PC-3 (cell line): ENCODE measurements at regions of chr6 and their contacts with region 1.

Region 1: DNA sequence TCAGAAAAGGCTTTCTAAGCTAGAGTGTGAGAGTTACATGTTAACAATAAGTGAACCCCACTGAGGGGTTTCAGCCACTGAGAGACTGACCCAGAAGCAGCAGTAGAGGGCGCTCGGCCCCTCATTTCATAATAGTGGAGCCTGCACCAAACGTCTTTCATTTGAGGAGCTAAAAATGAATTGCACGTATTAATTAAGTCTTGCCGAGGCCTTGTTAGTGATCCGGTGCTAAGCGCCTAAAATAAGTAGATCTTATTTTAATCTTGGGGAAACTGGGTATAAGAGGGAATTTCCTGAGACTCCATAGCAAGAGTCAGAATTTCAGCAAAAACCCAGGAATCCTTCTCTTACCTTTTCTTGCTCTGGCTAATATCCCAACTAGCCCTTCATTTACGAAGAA is 209.7 kb downstream of the FARS2 start:
- DNase-seq: peak; percentile 74
- ATAC-seq: peak; percentile 72
- H3K4me3 ChIP-seq: no peak overlapping the region
- H3K27ac ChIP-seq: peak overlapping the region; percentile 78
- H3K4me1 ChIP-seq: peaks cover 30% of the 10 kb centered on the region
- H3K27me3 ChIP-seq: no peaks in the 10 kb centered on the region
- CTCF ChIP-seq: peak; percentile 97

Region 2: DNA sequence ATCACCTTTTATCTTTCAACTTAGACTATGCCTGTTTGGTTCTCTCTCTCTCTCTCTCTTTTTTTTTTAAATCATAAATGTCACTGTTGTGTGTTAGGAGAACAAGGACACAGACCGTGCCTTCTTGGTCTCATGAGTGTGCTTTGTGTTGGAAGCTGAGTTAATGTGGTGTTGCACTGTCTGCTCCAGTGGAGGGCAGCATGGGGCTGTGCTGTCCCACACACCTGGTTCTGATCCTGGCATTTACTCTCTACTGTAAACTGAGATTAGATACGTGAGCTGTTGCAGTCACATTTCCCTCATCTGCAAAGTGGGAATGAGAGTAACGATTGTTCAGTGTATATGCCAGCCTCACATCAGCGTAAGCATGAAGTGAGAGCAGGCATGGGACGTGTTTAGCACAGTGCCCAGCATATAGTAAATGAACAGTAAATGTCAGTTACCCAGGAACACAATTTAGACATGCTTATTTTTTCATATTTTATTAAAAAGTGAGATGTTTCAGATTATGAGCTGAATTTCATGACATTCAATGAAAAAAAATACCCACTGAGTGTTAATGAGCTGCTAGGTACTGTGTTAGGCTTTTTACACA is 48.6 kb before region 1 on chr6:
- CTCF ChIA-PET with region 1: interaction called, 4 read pairs
- POLR2A ChIA-PET with region 1: no interaction called
- intact Hi-C with region 1: loop called (anchors 1 kb)
- DNase-seq: peak; percentile 72
- ATAC-seq: peak; percentile 100
- H3K4me3 ChIP-seq: no peak overlapping the region
- H3K27ac ChIP-seq: no peak overlapping the region
- H3K4me1 ChIP-seq: no peaks in the 10 kb centered on the region
- H3K27me3 ChIP-seq: no peaks in the 10 kb centered on the region
- CTCF ChIP-seq: peak; percentile 90

Region 3: GRCh38 chr6:5497896-5498578 is 27.0 kb after region 1 on chr6:
- CTCF ChIA-PET with region 1: interaction called, 7 read pairs
- POLR2A ChIA-PET with region 1: no interaction called
- intact Hi-C with region 1: loop called (anchors 1 kb)
- DNase-seq: peak; percentile 80
- ATAC-seq: peak; percentile 67
- H3K4me3 ChIP-seq: peak overlapping the region; percentile 64
- H3K27ac ChIP-seq: peak overlapping the region; percentile 83
- H3K4me1 ChIP-seq: peaks cover 26% of the 10 kb centered on the region
- H3K27me3 ChIP-seq: no peaks in the 10 kb centered on the region
- CTCF ChIP-seq: no peak

Region 4: GRCh38 chr6:5511954-5512353 is 40.9 kb after region 1 on chr6:
- CTCF ChIA-PET with region 1: no interaction called
- POLR2A ChIA-PET with region 1: no interaction called
- intact Hi-C with region 1: no loop called
- DNase-seq: peak; percentile 76
- ATAC-seq: peak; percentile 86
- H3K4me3 ChIP-seq: no peak overlapping the region
- H3K27ac ChIP-seq: 0 out of 2 replicates have a peak overlapping the region, but pooled peaks have one; percentile 35
- H3K4me1 ChIP-seq: peaks cover 17% of the 10 kb centered on the region
- H3K27me3 ChIP-seq: no peaks in the 10 kb centered on the region
- CTCF ChIP-seq: no peak

Region 5: DNA sequence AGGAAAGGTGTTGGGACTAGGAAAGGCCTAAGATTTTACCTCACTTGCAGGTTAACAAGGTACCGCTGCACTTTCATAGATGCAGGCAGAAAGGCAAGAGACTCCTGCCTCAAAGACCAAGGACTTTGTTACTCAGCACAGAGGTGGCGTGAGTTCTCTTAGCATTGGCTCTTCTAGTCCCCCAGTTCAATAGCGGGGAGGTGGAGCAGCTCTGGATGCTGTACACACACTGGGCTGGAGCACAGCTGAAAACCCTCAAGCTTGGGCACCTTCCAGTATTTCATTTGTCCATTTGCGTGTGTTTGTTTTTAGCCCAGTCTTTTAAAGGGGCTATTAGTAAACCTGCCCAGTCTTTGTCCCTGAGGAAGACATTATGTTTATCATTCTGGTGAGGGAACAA is 135.5 kb after region 1 on chr6:
- CTCF ChIA-PET with region 1: no interaction called
- POLR2A ChIA-PET with region 1: no interaction called
- intact Hi-C with region 1: no loop called
- DNase-seq: no peak
- ATAC-seq: no peak
- H3K4me3 ChIP-seq: no peak overlapping the region
- H3K27ac ChIP-seq: no peak overlapping the region
- H3K4me1 ChIP-seq: no peaks in the 10 kb centered on the region
- H3K27me3 ChIP-seq: no peaks in the 10 kb centered on the region
- CTCF ChIP-seq: no peak

Region 6: GRCh38 chr6:5680095-5680494 is 209.1 kb after region 1 on chr6:
- CTCF ChIA-PET with region 1: no interaction called
- POLR2A ChIA-PET with region 1: no interaction called
- intact Hi-C with region 1: loop called (anchors 5 kb)
- DNase-seq: no peak
- ATAC-seq: no peak
- H3K4me3 ChIP-seq: no peak overlapping the region
- H3K27ac ChIP-seq: no peak overlapping the region
- H3K4me1 ChIP-seq: peaks cover 30% of the 10 kb centered on the region
- H3K27me3 ChIP-seq: no peaks in the 10 kb centered on the region
- CTCF ChIP-seq: no peak

Region 7: GRCh38 chr6:5892669-5893068 is 421.6 kb after region 1 on chr6:
- CTCF ChIA-PET with region 1: no interaction called
- POLR2A ChIA-PET with region 1: no interaction called
- intact Hi-C with region 1: loop called (anchors 5 kb)
- DNase-seq: no peak
- ATAC-seq: no peak
- H3K4me3 ChIP-seq: peak overlapping the region; percentile 61
- H3K27ac ChIP-seq: peak overlapping the region; percentile 43
- H3K4me1 ChIP-seq: peaks cover 7% of the 10 kb centered on the region
- H3K27me3 ChIP-seq: no peaks in the 10 kb centered on the region
- CTCF ChIP-seq: no peak